HEK293 (cell line): ENCODE measurements at regions of chr4 and their contacts with region 1.

Region 1: GRCh38 chr4:4694296-4694772 is 152.5 kb upstream of the STX18 start:
- H3K4me3 ChIP-seq: no peak overlapping the region
- H3K27ac ChIP-seq: no peak overlapping the region
- H3K4me1 ChIP-seq: peaks cover 6% of the 10 kb centered on the region; the same call in 1 of the 2 replicates
- CTCF ChIP-seq: no peak

Region 2: DNA sequence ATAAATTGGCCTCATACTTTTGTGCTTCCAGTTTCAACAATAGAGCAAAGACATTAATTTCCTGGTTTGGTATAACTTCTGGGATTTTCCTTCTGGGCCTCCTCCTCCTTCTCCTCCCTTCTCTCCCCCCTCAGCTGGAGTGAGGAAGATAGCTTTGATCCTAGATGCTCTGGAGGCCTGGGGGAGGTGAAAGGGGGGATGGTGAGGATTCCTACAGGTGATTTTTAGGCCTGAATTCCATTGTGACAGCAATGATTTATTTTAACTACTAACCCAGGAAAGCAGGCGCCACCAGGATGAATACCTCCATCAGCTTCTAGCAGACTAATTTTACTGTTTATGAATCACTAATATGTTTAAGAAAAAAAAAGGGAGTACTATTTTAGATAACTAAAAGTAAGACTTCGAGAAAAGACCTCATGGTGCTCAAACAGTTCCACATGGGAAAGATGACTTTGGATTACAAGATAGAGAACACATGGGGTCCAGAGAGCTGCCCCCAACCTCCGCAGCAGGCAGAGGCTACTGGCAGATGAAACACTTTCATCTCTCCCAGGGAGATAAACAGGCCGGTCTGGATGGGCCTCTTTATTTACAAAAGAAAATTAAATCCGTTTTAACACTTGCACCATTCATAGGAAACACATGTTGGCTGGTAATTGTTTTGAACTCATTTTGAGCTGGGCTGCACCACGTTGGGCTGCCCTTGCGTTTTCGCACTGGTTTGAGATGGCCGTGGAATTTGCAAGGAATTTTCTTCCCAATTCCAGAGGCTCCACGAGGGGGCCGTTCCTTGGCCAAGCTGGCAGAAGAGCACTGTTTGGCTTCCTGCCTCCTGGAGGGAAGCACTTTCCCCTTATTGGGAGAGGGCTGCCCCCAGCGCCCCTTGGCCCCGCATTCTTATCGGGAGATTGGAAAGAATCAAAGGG is 27.4 kb before region 1 on chr4:
- CTCF ChIA-PET with region 1: interaction called, 11 read pairs
- POLR2A ChIA-PET with region 1: no interaction called
- H3K4me3 ChIP-seq: no peak overlapping the region
- H3K27ac ChIP-seq: no peak overlapping the region
- H3K4me1 ChIP-seq: no peaks in the 10 kb centered on the region
- CTCF ChIP-seq: no peak

Region 3: DNA sequence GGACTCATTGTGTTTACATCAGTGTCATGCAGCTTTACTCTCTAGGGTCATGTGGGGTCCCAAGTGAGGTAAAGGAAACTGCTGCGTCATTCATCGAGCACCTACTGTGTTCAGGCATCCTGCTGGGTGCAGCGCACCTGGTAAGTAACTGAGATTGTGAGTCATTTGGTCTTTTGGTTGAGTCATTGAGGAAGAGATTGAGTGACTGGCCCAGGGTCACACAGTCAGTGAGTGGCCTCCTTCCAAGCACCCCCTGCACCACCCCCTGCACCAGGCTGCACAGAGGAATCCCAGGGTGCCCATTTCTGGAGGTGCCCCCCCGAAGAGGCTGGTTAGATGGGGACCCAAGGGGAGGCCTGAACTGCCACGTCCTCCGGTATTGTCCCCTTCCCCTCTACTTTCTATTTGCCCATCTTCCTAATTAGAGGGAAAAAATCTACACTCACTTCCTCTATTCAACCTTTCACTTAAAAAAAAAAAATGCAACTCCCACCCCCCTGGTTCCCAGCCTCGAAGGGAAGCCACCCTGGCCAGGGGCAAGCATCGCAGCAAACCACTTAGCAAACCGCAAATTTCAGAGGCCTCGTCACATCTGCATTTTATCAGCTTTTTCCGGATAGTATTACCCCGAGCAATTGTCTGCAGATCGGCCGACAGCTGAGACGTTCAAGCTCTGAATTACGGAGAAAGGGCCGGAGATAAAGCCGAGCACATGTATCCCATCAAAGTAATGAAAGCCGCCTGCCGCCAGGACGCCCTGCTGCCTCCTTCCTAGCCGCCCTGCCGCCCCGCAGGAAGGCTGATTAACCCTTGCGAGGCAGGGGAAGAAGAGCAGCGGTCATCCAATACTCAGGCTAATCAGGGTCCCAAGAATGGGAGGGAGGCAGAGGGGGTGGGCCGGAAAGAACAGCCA is 68.8 kb after region 1 on chr4:
- CTCF ChIA-PET with region 1: no interaction called
- POLR2A ChIA-PET with region 1: no interaction called
- H3K4me3 ChIP-seq: no peak overlapping the region
- H3K27ac ChIP-seq: no peak overlapping the region; the same call in 1 of the 2 replicates
- H3K4me1 ChIP-seq: peaks cover 3% of the 10 kb centered on the region; the same call in 1 of the 2 replicates
- CTCF ChIP-seq: no peak